HEK293 (cell line): ENCODE measurements at regions of chr5 and their contacts with region 1.

Region 1: GRCh38 chr5:79133657-79134451 is 22.2 kb downstream of the BHMT start:
- H3K4me3 ChIP-seq: peak overlapping the region; percentile 33
- H3K27ac ChIP-seq: peak overlapping the region; percentile 36; the same call in 1 of the 2 replicates
- H3K4me1 ChIP-seq: no peaks in the 10 kb centered on the region
- CTCF ChIP-seq: peak; percentile 73; the same call in 1 of the 2 replicates

Region 2: GRCh38 chr5:78899922-78900362 is 233.9 kb before region 1 on chr5:
- CTCF ChIA-PET with region 1: interaction called, 19 read pairs
- POLR2A ChIA-PET with region 1: no interaction called
- H3K4me3 ChIP-seq: no peak overlapping the region
- H3K27ac ChIP-seq: no peak overlapping the region
- H3K4me1 ChIP-seq: no peaks in the 10 kb centered on the region
- CTCF ChIP-seq: 0 out of 2 replicates have a peak, but pooled peaks have one; percentile 10

Region 3: DNA sequence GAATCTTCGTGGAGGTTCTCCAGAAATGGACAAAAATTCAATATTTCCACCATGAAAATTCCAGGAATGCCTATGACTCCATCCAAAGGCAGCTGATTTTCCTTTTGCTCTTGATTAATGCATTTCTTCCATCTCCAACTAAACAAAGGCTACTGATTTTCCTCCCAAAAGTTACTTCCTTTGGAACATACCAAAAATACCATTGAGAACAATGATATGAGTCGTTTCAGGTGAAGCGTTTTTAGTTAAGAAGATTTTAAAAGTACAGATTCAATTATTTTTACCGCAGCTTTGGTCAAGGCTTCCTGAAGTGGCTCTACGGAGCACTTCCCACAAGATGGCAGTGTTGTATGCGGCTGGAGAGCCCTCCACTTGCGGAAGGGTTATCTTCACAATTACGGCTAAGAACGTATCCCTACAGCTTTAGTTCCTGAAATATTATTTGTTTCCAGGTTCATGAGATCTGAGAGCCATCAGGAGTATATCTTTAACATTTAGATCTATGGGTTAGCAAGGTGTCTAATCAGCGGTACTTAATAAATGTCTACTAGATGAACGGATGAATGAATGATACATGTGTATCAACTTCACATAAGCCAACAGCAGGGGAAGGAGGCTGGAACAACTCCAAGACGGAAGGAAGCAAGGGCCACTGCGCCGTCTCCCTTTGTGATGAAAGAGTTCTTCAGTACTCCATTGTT is 112.8 kb before region 1 on chr5:
- CTCF ChIA-PET with region 1: interaction called, 303 read pairs
- POLR2A ChIA-PET with region 1: interaction called, 12 read pairs
- H3K4me3 ChIP-seq: no peak overlapping the region
- H3K27ac ChIP-seq: no peak overlapping the region
- H3K4me1 ChIP-seq: peaks cover 5% of the 10 kb centered on the region
- CTCF ChIP-seq: peak; percentile 79

Region 4: DNA sequence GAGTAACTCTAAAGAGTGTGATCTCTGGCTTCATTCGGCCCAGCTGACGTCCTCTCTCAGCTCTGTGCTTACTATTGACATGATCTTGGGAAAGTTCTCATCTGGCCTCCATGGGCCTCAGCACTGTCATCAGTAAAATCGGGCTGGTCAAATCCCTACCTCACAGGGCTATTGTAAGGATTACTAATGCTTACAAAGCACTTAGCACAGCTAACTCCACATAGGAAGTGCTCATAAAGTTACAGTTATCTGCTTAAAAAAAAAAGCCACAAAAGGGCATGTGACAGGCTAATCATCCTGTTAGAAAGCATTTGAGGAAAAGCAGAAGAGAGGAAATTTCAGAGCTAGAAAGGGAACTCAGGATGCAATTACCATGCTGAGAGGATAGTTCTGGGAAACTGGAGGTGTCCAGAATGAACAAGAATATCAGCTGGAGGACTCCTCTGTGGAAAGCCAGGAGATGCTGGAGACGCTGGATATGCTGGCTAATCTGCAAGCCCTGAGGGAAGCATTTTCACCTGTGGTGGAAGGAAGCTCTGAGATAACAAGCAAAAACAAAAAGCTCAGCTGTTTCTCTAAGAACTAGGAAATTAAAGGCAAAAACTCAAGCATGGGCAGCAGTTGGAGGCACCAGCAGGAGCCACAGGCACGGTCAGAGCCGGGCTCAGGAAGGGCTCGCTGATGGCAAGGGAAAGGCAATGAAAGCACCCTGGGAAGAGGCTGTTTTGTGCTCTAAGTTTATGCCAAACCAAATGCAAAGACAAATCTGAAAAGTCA is 26.6 kb before region 1 on chr5:
- CTCF ChIA-PET with region 1: interaction called, 11 read pairs
- POLR2A ChIA-PET with region 1: no interaction called
- H3K4me3 ChIP-seq: no peak overlapping the region
- H3K27ac ChIP-seq: peak overlapping the region; percentile 3; the same call in 1 of the 2 replicates
- H3K4me1 ChIP-seq: peaks cover 10% of the 10 kb centered on the region; the same call in 1 of the 2 replicates
- CTCF ChIP-seq: no peak

Region 5: DNA sequence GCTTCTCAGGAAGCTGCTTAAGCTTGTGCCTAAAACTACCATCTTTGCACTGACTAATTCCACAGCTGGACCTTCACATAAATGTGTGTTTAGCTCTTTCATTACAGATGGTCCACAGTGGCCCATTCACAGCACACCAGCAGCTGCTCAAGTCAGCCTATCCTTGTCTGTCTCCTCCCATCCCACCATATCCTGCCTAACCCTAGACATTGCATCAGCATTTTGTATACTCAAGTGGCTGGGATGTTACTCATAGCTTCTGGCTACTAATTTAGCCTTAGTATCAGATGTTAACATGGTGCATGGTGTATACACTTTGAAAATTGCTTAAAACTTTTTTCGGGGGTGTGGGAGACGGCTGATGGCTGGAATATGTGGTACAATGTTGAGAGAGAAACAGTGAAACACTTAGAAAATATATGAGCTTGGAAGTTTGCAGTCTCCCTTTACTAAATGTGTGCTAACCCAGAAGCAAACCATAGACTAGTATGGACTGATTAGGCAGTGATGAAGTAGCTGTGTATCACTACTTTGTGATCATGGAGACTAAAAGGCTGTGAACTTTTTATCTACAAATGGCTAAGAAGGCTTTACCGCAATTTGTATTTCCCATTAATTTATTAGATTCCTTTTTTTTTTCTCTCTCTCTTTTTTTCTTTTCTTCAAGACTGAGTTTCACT is 185.2 kb after region 1 on chr5:
- CTCF ChIA-PET with region 1: interaction called, 10 read pairs
- POLR2A ChIA-PET with region 1: no interaction called
- H3K4me3 ChIP-seq: no peak overlapping the region
- H3K27ac ChIP-seq: no peak overlapping the region
- H3K4me1 ChIP-seq: 0 out of 2 replicates have a peak, but pooled peaks cover 3% of the 10 kb centered on the region
- CTCF ChIP-seq: no peak

Region 6: GRCh38 chr5:79535477-79536192 is 401.8 kb after region 1 on chr5:
- CTCF ChIA-PET with region 1: interaction called, 14 read pairs
- POLR2A ChIA-PET with region 1: no interaction called
- H3K4me3 ChIP-seq: no peak overlapping the region
- H3K27ac ChIP-seq: no peak overlapping the region
- H3K4me1 ChIP-seq: 0 out of 2 replicates have a peak, but pooled peaks cover 4% of the 10 kb centered on the region
- CTCF ChIP-seq: peak; percentile 48; the same call in 1 of the 2 replicates